ENCODE measurements at regions of chr16 and their contacts with region 1.

Region 1: DNA sequence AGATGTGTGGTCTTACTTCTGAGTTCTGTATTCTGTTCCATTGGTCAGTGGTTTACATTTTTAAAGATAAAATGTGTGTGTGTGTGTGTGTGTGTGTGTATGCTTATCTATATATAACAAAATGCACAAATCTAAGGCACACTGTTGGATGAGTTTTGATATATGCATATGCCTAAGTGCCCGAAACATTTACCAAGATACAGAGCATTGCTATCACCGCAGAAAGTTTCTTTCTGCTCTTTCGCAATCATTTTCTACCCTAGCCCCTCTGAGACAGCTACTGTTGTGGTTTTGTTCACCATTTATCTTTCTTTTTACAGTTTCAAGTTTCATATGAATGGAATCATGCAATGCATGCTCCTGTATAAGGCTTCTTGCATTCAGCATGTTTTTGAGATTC is 97.0 kb downstream of the MRTFB start:
- DNase-seq: no peak
- ATAC-seq: no peak
- H3K4me3 ChIP-seq: no peak overlapping the region
- H3K27ac ChIP-seq: no peak overlapping the region
- H3K4me1 ChIP-seq: no peaks in the 10 kb centered on the region
- H3K27me3 ChIP-seq: no peaks in the 10 kb centered on the region
- CTCF ChIP-seq: no peak

Region 2: DNA sequence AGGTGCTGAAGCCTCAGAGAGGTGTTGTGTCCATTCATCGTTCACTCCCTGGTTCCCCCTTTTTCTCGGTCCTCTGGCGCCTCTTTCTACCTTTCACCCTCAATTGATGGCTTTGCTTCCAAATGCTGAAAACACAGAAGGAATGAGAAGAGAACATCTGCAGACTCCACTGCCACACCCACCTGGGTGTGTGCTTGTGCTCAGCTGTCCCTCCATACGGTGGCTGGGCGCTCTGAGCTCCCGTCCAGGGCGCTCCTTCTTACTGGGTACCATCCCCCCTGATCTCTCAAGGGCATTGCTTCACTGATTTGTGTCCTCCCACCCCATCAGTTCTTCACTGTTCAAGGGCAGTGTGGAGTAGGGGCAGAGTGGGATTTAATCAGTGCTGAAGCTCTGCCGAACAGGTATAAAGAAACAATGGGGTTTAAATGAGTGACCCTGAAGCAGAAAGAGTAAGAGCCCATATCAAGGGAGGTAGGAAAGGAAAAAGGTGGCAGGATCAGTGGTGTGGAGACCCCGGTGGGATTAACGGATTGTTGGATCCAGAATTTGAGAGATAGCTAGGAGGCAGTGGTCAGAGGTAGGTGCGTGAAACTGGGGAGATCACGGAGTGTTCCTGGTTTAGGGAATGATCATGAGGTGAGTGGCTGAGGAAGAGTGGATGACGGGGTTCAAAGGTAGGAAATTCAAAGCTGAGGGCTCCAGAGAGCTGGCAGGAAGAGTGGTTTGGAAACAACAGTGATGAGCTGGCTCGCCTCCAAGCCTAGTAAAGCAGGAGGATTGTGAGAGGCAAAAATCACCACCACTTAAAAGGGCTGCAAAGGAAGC is 56.2 kb before region 1 on chr16:
- CTCF ChIA-PET with region 1: no interaction called
- POLR2A ChIA-PET with region 1: no interaction called
- in situ Hi-C with region 1: loop called (anchors 5 kb)
- intact Hi-C with region 1: no loop called
- DNase-seq: no peak
- ATAC-seq: peak; percentile 24; the same call in 1 of the 2 replicates
- H3K4me3 ChIP-seq: no peak overlapping the region
- H3K27ac ChIP-seq: no peak overlapping the region
- H3K4me1 ChIP-seq: peaks cover 28% of the 10 kb centered on the region
- H3K27me3 ChIP-seq: no peaks in the 10 kb centered on the region
- CTCF ChIP-seq: no peak

Region 3: GRCh38 chr16:14128097-14128496 is 40.0 kb before region 1 on chr16:
- CTCF ChIA-PET with region 1: no interaction called
- POLR2A ChIA-PET with region 1: interaction called, 10 read pairs
- in situ Hi-C with region 1: no loop called
- intact Hi-C with region 1: no loop called
- DNase-seq: no peak
- ATAC-seq: no peak
- H3K4me3 ChIP-seq: no peak overlapping the region
- H3K27ac ChIP-seq: no peak overlapping the region
- H3K4me1 ChIP-seq: peaks cover 5% of the 10 kb centered on the region; the same call in 1 of the 2 replicates
- H3K27me3 ChIP-seq: no peaks in the 10 kb centered on the region
- CTCF ChIP-seq: no peak

Measured in Panc1 (cell line).